Ascending aorta (tissue), 2 donors: ENCODE measurements at regions of chr16 and their contacts with region 1.

Region 1: DNA sequence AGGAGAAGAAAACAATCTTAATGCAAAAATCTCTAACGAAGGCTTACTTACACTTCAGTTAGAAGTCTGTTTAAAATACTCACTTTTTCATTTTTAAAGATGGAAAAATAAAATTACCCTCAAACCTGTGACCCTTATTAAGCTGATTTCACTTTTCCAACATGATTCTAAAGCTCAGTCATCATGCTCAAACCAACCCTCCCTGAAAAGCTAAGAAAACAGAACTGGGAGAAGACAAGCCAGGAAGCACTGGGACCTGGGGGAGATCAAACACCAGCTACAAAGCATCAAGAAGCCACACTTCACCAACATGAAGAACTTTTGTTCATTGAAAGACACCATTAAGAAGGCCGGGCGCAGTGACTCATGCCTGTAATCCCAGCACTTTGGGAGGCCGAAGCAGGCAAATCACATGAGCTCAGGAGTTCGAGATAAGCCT is 88.8 kb downstream of the LITAF start:
- DNase-seq: peak in 1 of 2 donors; percentile 78
- H3K4me3 ChIP-seq: no peak overlapping the region
- H3K27ac ChIP-seq: peak overlapping the region; percentile 87 to 96
- H3K4me1 ChIP-seq: peaks cover 18 to 41% of the 10 kb centered on the region in 2 donors
- H3K27me3 ChIP-seq: no peaks in the 10 kb centered on the region
- CTCF ChIP-seq: no peak

Region 2: GRCh38 chr16:10964039-10964890 is 533.6 kb before region 1 on chr16:
- intact Hi-C with region 1: loop called (anchors 10 kb)
- DNase-seq: peak; percentile 46 to 89
- H3K4me3 ChIP-seq: peak overlapping the region in 1 of 2 donors; percentile 29
- H3K27ac ChIP-seq: peak overlapping the region in 1 of 2 donors; percentile 64
- H3K4me1 ChIP-seq: peaks cover 0 to 14% of the 10 kb centered on the region in 2 donors
- H3K27me3 ChIP-seq: no peaks in the 10 kb centered on the region
- CTCF ChIP-seq: peak; percentile 92 to 94 (median 93)

Region 3: DNA sequence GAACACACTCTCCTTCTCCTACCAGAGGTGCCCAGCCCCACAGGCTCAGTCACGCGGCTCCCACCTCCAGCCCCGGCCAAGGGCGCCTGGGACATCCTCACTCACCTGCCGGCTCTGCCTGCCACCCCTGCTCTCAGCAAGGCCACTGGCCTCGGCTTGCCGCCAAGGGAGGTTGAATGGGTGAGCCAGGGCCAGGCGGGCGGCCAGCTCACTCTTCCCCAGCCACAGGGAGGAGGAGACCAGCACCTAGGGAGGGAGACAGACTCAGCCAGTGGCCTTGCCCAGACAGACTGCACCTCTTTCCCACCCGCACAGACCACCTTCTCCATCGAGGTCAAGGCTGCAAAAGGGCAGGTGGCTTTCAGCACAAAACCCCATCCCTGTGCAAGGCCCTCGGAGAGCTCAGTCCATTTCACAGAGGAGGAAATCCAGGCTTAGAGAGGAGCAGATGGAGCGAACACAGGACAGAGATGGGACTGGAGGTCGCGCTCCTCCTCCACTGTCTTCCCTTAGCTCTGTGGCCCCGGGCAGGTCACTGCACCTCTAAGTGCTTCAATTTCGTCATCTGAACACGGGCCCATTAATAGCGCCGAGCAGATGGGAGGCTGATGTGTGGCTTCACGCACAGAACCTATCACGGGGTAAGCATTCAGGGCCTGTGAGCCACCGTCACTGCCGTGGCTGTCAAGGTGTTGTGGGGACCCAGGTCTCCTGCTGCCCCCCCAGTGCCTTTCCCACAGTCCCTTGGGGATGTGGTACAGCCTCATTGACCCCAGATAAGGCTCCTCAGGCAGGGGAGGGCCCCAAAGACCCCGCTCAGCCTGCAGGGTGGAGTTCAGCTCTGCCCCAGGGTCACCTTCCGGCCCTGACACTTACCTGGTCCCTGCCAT is 96.5 kb before region 1 on chr16:
- intact Hi-C with region 1: no loop called
- DNase-seq: no peak
- H3K4me3 ChIP-seq: no peak overlapping the region
- H3K27ac ChIP-seq: no peak overlapping the region
- H3K4me1 ChIP-seq: peaks cover 0 to 2% of the 10 kb centered on the region in 2 donors
- H3K27me3 ChIP-seq: no peaks in the 10 kb centered on the region
- CTCF ChIP-seq: no peak

Region 4: DNA sequence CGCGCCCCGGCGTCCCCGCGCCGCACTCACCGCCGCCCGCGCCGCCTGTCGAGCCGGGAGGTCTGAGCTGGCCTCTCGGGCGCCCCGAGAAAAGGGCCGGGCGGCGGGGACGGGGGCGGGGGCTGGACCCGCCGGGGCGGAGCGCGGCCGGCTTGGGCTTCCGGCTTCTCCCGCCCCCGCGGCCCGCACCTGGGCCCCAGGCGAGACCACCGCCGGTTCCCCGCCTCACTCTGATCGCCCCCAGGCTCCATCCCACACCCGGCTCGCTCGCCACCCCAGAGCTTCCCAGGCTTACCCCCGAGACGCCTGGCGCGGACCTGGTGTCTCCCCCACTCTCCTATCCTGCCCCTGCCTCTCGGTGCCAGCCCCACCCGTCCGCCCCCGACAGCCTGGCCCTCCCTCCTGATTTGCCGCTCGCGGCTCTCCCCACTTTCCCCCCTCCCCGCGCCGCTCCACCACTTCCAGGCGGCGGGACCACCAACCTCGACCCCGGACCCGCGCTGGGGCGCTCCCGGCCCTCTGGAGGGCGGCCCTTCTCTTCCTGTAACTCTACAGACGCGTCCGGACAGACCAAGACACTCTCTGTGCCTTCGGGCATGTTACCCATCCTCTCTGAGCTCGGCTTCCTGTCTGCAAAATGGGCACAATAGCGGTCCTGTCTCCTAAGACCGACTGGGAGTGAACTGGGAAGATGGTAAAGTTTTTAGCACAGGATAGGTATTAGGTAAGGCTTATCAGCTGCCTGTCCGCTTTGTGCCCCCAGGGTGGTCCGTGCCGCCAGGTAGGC is 89.2 kb after region 1 on chr16 and contains the start of gene LITAF:
- intact Hi-C with region 1: loop called (anchors 1 kb)
- DNase-seq: peak in 1 of 2 donors; percentile 80
- H3K4me3 ChIP-seq: peak within 1 kb of the TSS; percentile 86 to 98
- H3K27ac ChIP-seq: peak within 1 kb of the TSS; percentile 98
- H3K4me1 ChIP-seq: peaks cover 3 to 22% of the 10 kb centered on the region in 2 donors
- H3K27me3 ChIP-seq: no peaks in the 10 kb centered on the region
- CTCF ChIP-seq: no peak
- total RNA-seq, gene LITAF: 40.7 TPM

Region 5: GRCh38 chr16:11667824-11668622 is 170.2 kb after region 1 on chr16 and contains the start of gene SNN:
- intact Hi-C with region 1: loop called (anchors 2 kb)
- DNase-seq: peak; percentile 52 to 93
- H3K4me3 ChIP-seq: peak within 1 kb of the TSS; percentile 95 to 98
- H3K27ac ChIP-seq: peak within 1 kb of the TSS; percentile 78 to 81
- H3K4me1 ChIP-seq: peaks cover 9 to 34% of the 10 kb centered on the region in 2 donors
- H3K27me3 ChIP-seq: no peaks in the 10 kb centered on the region
- CTCF ChIP-seq: no peak
- total RNA-seq, gene SNN: 2.1 TPM

Region 6: GRCh38 chr16:12062343-12063005 is 564.6 kb after region 1 on chr16:
- intact Hi-C with region 1: loop called (anchors 5 kb)
- DNase-seq: peak; percentile 89 to 98
- H3K4me3 ChIP-seq: no peak overlapping the region
- H3K27ac ChIP-seq: peak overlapping the region; percentile 89 to 94
- H3K4me1 ChIP-seq: peaks cover 7 to 31% of the 10 kb centered on the region in 2 donors
- H3K27me3 ChIP-seq: no peaks in the 10 kb centered on the region
- CTCF ChIP-seq: no peak

Region 7: DNA sequence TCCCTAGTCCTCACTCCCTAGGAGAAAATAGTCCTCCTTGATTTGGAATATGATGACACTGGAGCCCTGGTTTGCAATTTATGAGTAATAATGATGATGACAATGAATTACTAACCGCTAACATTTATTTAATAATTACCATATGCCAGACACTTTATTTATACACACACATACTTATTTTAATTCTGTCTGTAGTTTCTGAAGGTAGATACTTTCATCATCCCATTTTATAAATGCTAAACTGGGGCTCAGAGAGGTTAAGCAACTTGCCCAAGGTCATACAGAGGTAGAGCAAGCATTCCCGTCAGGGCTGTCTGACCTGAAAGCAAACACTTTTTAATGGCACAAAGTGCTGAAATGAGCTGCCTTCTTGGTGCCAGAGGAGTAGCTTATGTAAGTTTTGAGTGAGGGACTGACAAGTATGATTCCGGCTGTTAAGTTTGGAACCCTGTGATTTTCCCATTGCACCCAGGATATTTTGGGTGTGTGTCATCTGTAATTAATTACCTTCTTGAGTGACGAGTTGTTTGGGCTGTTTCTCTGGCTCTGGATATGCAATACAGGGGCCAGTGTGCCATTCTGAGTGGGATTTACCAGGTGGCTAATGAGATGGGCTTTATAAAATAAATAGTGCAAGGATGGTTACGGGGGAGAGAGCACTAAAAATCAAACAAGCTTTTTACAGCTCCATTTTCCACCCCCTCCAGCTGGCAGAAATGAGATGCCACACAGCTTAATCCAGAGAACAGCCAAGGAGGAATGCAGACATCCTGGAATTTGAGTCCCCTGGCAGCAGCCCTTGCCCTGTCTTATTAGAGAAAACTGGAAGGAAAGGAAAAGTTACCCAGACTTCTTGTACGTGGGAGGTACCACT is 690.4 kb after region 1 on chr16:
- intact Hi-C with region 1: no loop called
- DNase-seq: no peak
- H3K4me3 ChIP-seq: no peak overlapping the region
- H3K27ac ChIP-seq: peak overlapping the region; percentile 31 to 42
- H3K4me1 ChIP-seq: peaks cover 0 to 23% of the 10 kb centered on the region in 2 donors
- H3K27me3 ChIP-seq: no peaks in the 10 kb centered on the region
- CTCF ChIP-seq: no peak